Head of caudate nucleus (tissue), 42 donors: ENCODE measurements at regions of chr3 and their contacts with region 1.

Region 1: DNA sequence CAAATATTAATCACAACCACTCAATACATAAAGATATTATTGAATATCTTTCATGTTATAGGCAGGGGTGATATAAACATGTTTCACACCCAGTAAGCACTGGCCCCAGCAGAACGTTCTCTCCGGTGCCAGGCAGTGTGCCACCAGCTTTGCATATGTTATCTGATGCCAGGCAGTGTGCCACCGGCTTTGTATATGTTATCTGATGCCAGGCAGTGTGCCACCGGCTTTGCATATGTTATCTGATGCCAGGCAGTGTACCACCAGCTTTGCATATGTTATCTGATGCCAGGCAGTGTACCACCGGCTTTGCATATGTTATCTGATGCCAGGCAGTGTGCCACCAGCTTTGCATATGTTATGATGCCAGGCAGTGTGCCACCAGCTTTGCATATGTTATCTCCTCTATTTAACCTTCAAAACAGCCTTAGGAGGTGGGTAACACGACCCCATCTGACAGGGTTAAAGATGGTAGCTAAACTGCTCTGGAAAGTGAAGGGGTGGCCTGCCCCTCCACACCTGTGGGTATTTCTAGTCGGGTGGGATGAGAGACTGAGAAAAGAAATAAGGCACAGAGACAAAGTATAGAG is 6.9 kb downstream of the MUC20 start:
- DNase-seq: no peak

Region 2: DNA sequence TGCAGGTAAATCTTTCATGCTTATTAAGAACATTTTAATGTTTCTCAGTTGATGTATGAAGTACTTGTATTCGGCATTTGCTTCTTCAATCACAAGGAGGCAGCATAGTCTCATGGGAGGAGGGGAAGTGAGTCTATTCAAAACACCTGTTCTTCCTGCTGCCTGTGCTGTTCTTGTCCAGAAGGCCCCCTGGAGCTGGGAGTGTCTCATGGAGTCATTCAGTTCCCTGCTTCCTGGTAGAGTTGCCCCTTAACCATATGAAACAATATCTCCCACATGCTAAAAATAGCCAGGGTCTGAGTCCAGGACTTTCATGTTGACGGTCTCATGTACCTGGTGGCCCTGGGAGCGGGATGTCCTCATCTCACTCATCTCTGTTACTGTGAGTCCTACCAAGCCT is 169.1 kb before region 1 on chr3:
- intact Hi-C with region 1: no loop called
- DNase-seq: peak in 3 of 42 donors; percentile 19 to 51 (median 48)

Region 3: DNA sequence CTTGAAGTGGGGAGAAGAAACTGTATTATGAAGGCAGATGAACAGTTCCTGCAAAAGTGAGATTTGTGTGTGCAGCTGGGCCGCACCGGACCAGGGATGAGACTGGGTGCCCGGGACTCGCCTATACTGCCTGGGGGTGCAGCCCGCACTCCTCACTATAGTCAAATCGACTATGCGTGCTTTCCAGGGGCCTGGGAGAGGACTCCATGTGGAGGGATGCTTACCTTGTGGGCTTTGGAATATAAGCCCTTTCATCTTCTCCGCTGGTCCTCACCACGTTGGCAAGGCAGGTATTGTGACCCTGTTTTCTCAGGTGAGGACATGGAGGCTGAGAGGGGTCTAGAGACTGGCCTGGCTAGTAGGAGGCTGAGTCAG is 111.0 kb before region 1 on chr3:
- intact Hi-C with region 1: loop called (anchors 5 kb)
- DNase-seq: peak in 1 of 42 donors; percentile 35